Sigmoid colon (tissue), 7 donors: ENCODE measurements at regions of chr20 and their contacts with region 1.

Region 1: DNA sequence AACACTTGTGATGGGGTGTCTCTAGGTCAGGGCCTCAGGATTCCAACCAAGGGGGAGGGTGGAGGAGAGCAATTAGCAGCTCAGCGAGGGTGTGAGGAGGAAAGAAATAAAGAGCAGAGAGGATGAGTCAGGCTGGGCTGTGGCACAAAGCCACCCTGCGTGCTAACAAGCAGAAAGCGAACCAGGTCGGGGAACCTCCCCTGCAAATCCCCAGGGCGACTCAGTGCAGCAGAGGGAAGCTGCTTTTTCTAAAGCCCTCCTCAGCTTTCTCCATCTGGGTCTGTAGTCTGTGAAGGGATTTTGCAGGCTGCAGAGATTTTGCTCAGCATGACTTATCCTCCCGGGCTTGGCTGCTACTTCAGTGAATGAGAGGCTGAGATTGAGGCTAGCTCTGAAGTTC is 6.6 kb upstream of the SPO11 start:
- DNase-seq: no peak
- H3K4me3 ChIP-seq: no peak overlapping the region
- H3K27ac ChIP-seq: peak overlapping the region in 2 of 4 donors; percentile 43 to 52
- H3K4me1 ChIP-seq: peaks cover 0 to 14% (median 11%) of the 10 kb centered on the region in 4 donors
- H3K27me3 ChIP-seq: no peaks in the 10 kb centered on the region
- CTCF ChIP-seq: no peak
- EP300 ChIP-seq: no peak
- POLR2A ChIP-seq: no peak

Region 2: DNA sequence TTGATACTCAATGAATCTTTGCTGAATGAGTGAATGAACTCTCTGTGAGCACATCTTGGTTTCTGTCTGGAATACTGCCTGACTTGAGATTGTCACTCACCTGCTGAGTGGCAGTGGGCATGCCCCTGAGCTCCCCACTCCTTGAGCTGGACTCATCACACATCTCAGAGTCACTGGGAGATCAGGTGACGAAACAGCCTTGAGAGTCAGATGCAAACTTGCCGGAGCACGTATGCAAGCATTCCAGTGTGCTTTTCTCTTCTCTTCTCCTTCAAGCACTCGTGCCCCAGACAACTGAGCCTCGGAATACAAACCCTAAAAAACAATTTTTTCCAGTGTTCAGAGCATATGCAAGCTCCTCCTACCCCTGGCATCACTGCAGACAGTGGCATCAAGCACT is 47.2 kb before region 1 on chr20:
- intact Hi-C with region 1: loop called (anchors 5 kb)
- DNase-seq: no peak
- H3K4me3 ChIP-seq: no peak overlapping the region
- H3K27ac ChIP-seq: no peak overlapping the region
- H3K4me1 ChIP-seq: no peaks in the 10 kb centered on the region
- H3K27me3 ChIP-seq: no peaks in the 10 kb centered on the region
- CTCF ChIP-seq: no peak
- EP300 ChIP-seq: no peak
- POLR2A ChIP-seq: no peak

Region 3: GRCh38 chr20:57747861-57748481 is 424.9 kb after region 1 on chr20:
- intact Hi-C with region 1: no loop called
- DNase-seq: peak; percentile 57
- H3K4me3 ChIP-seq: peak overlapping the region in 3 of 4 donors; percentile 43 to 47 (median 46)
- H3K27ac ChIP-seq: peak overlapping the region; percentile 70 to 90 (median 82)
- H3K4me1 ChIP-seq: peaks cover 0 to 34% (median 27%) of the 10 kb centered on the region in 4 donors
- H3K27me3 ChIP-seq: no peaks in the 10 kb centered on the region
- CTCF ChIP-seq: no peak
- EP300 ChIP-seq: no peak
- POLR2A ChIP-seq: no peak